H1 (cell line): ENCODE measurements at regions of chr14 and their contacts with region 1.

Region 1: DNA sequence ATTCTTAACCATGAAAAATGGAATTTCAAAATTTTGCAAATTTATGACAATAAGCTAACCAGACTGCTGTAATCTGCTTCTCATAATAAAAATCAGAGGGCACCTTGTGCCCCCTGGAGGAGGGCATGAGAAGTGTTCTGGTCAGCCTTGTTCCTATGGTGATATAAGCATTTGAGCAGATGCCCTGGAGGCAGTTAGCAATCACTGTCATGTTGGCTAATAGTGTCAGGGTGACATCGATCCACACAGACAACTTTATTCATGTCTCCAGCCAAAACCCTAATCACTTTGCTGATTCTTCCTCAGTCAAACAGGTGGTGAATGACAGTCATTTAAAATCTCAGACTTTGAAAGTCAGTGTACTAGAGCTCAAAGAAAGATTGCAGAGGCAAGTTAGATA is 943.0 kb downstream of the GALC start:
- DNase-seq: peak; percentile 19 to 67
- H3K4me3 ChIP-seq: no peak overlapping the region
- H3K27ac ChIP-seq: no peak overlapping the region
- H3K4me1 ChIP-seq: peaks cover 0 to 3% (median under 1%) of the 10 kb centered on the region in 4 experiments; a peak in 1 of 7 replicates
- H3K27me3 ChIP-seq: no peaks in the 10 kb centered on the region
- CTCF ChIP-seq: peak; percentile 23 to 77 (median 63)
- EP300 ChIP-seq: no peak
- POLR2A ChIP-seq: no peak
- RAD21 ChIP-seq: peak; percentile 69 to 72

Region 2: DNA sequence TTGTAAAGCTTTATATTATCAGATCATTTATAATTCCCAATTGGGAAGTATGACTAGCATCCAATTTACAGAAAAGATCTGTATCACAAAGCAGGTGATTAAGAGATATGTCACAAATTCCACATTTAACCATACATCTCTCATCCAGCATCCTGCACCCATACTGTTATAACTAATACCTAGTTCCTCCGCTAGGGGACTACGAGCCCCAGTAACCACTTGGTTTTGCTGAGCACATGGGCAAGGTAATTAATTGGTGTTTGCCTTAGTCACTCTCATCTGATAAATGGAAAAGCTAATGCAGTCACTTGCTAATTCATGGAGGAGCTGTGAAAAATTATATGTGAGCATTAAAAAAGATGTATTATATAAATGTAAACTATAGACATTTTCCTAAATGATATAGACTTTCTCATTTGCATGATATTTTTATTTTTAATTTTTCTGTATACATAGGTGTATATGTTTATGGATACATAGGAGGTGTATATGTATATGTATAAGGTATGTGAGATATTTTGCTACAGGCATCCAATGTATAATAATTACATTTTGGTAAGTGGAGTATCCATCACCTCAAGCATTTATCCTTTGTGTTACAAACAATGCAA is 88.7 kb before region 1 on chr14:
- CTCF ChIA-PET with region 1: interaction called, 28 read pairs
- POLR2A ChIA-PET with region 1: no interaction called
- DNase-seq: no peak
- H3K4me3 ChIP-seq: no peak overlapping the region
- H3K27ac ChIP-seq: no peak overlapping the region
- H3K4me1 ChIP-seq: no peaks in the 10 kb centered on the region
- H3K27me3 ChIP-seq: peaks cover 0 to 1% (median 0%) of the 10 kb centered on the region in 4 experiments; a peak in 1 of 7 replicates
- CTCF ChIP-seq: peak in 2 of 3 experiments; percentile 55 to 67; a peak in 2 of 4 replicates
- EP300 ChIP-seq: no peak
- POLR2A ChIP-seq: no peak
- RAD21 ChIP-seq: peak; percentile 70 to 71

Region 3: DNA sequence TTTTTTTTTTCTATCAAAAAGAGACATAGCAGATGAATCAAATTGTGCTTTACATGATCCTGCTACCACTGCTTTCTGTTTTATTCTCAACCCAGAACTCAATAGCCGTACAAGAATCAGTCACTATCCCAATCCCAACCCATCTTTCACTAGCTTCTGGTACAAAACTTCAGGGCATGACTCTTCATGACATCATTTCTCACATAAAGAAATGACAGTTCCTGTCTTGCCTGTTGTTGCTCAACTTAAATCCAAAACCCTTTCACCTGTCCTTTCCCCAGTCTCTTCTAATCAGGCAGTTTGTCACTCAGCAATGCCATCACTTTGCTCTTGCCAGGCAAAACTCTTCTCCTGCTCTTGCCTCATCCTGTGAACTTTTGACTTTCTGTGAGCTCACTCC is 19.8 kb before region 1 on chr14:
- CTCF ChIA-PET with region 1: interaction called, 14 read pairs
- POLR2A ChIA-PET with region 1: no interaction called
- DNase-seq: no peak
- H3K4me3 ChIP-seq: no peak overlapping the region
- H3K27ac ChIP-seq: no peak overlapping the region
- H3K4me1 ChIP-seq: peaks cover 0 to 2% (median 0%) of the 10 kb centered on the region in 4 experiments; a peak in 1 of 7 replicates
- H3K27me3 ChIP-seq: no peaks in the 10 kb centered on the region
- CTCF ChIP-seq: no peak
- EP300 ChIP-seq: no peak
- POLR2A ChIP-seq: no peak
- RAD21 ChIP-seq: no peak

Region 4: GRCh38 chr14:87066221-87066817 is 16.4 kb after region 1 on chr14:
- CTCF ChIA-PET with region 1: interaction called, 20 read pairs
- POLR2A ChIA-PET with region 1: no interaction called
- DNase-seq: no peak
- H3K4me3 ChIP-seq: no peak overlapping the region
- H3K27ac ChIP-seq: no peak overlapping the region
- H3K4me1 ChIP-seq: no peaks in the 10 kb centered on the region
- H3K27me3 ChIP-seq: no peaks in the 10 kb centered on the region; a peak in 1 of 7 replicates
- CTCF ChIP-seq: peak in 2 of 3 experiments; percentile 28 to 49; a peak in 2 of 4 replicates
- EP300 ChIP-seq: no peak
- POLR2A ChIP-seq: no peak
- RAD21 ChIP-seq: peak; percentile 59 to 60

Region 5: DNA sequence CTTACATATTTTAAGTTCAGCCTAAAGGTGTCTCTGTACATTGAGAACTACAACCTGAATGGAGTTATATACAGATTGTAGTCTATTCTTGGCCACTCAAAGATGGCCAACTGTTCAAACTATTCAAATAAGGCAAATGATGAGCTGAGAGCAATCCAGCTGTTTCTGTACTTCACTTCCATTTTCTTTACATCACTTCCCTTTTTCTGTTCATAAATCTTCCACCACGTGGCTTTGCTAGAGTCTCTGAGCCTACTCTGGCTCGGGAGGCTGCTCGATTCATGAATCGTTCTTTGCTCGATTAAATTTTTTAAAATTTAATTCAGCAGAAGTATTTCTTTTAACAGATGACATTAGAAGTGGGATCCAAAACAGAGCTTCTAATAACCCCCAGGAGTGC is 63.3 kb after region 1 on chr14:
- CTCF ChIA-PET with region 1: interaction called, 18 read pairs
- POLR2A ChIA-PET with region 1: no interaction called
- DNase-seq: no peak
- H3K4me3 ChIP-seq: no peak overlapping the region
- H3K27ac ChIP-seq: no peak overlapping the region
- H3K4me1 ChIP-seq: no peaks in the 10 kb centered on the region; a peak in 1 of 7 replicates
- H3K27me3 ChIP-seq: no peaks in the 10 kb centered on the region
- CTCF ChIP-seq: peak in 2 of 3 experiments; percentile 17 to 28; a peak in 2 of 4 replicates
- EP300 ChIP-seq: no peak
- POLR2A ChIP-seq: no peak
- RAD21 ChIP-seq: peak; percentile 16 to 43; a peak in 3 of 4 replicates